ENCODE measurements at regions of chr12 and their contacts with region 1.

Region 1: GRCh38 chr12:48957141-48958048 is at the start of gene ARF3:
- DNase-seq: peak; percentile 79 to 97 (median 92)
- ATAC-seq: peak; percentile 94
- H3K4me3 ChIP-seq: peak within 1 kb of the TSS; percentile 68 to 97
- H3K4me3 Mint-ChIP-seq: peak within 1 kb of the TSS; percentile 97
- H3K27ac ChIP-seq: peak within 1 kb of the TSS; percentile 50 to 71
- H3K27ac Mint-ChIP-seq: peak within 1 kb of the TSS; percentile 86
- H3K4me1 ChIP-seq: peaks cover 19% of the 10 kb centered on the region
- H3K4me1 Mint-ChIP-seq: peaks cover 42% of the 10 kb centered on the region
- H3K27me3 ChIP-seq: no peaks in the 10 kb centered on the region
- H3K27me3 Mint-ChIP-seq: peaks cover 8% of the 10 kb centered on the region
- CTCF ChIP-seq: no peak
- total RNA-seq, gene ARF3: 34.7 to 36.4 TPM

Region 2: GRCh38 chr12:48865434-48866290 is 91.7 kb before region 1 on chr12 and contains the start of gene RND1:
- CTCF ChIA-PET with region 1: no interaction called
- POLR2A ChIA-PET with region 1: interaction called, 3 read pairs
- intact Hi-C with region 1: loop called in 1 of 2 experiments (anchors 1 kb)
- DNase-seq: peak; percentile 58 to 96 (median 85)
- ATAC-seq: peak; percentile 95
- H3K4me3 ChIP-seq: peak within 1 kb of the TSS; percentile 56 to 74
- H3K4me3 Mint-ChIP-seq: peak within 1 kb of the TSS; percentile 93
- H3K27ac ChIP-seq: peak within 1 kb of the TSS; percentile 19 to 28
- H3K27ac Mint-ChIP-seq: peak within 1 kb of the TSS; percentile 84
- H3K4me1 ChIP-seq: peaks cover 15% of the 10 kb centered on the region
- H3K4me1 Mint-ChIP-seq: peaks cover 27% of the 10 kb centered on the region
- H3K27me3 ChIP-seq: peaks cover 7 to 16% of the 10 kb centered on the region in 2 experiments
- H3K27me3 Mint-ChIP-seq: peaks cover 30% of the 10 kb centered on the region
- CTCF ChIP-seq: no peak
- total RNA-seq, gene RND1: 11.9 to 12.9 TPM

Region 3: DNA sequence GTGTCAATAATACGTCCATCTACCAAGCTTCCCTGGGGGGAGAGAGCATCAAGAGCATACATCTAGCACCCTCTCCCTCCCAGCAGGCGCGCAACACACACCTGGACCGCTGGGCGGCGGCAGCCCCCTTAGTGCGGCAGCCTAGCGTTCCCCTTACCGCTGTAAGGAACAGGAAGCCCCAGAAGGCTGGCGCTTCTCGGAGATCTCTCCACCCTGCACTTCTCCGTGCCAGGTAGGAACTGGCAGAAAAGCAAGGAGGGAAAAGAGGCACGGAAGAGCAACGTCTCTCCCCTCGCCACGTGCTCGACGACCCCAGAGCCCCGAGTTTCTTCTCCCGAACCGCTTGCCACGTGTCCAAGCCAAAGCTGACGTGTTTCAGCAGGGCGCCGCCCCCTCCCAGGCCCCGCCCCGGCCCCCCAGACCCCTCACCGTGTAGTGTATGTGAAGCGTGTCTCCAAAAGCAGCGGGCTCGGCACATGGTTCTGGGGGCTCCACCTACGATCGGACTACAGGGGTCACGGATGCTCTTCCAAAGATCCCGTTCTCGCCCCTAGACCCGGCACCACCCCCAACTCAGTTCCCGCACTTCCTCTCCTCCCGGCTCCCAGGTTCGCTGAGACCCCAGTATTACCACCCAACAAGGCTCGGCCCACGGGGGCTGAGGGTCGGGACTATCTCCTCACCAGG is 32.6 kb before region 1 on chr12:
- CTCF ChIA-PET with region 1: interaction called, 8 read pairs
- POLR2A ChIA-PET with region 1: interaction called, 9 read pairs
- intact Hi-C with region 1: loop called (anchors 1 kb)
- DNase-seq: peak; percentile 65 to 90 (median 83)
- ATAC-seq: peak; percentile 69
- H3K4me3 ChIP-seq: peak overlapping the region; percentile 96 to 99
- H3K4me3 Mint-ChIP-seq: peak overlapping the region; percentile 97
- H3K27ac ChIP-seq: peak overlapping the region; percentile 94
- H3K27ac Mint-ChIP-seq: peak overlapping the region; percentile 97
- H3K4me1 ChIP-seq: peaks cover 24% of the 10 kb centered on the region
- H3K4me1 Mint-ChIP-seq: peaks cover 46% of the 10 kb centered on the region
- H3K27me3 ChIP-seq: no peaks in the 10 kb centered on the region
- H3K27me3 Mint-ChIP-seq: no peaks in the 10 kb centered on the region
- CTCF ChIP-seq: peak; percentile 78

Region 4: DNA sequence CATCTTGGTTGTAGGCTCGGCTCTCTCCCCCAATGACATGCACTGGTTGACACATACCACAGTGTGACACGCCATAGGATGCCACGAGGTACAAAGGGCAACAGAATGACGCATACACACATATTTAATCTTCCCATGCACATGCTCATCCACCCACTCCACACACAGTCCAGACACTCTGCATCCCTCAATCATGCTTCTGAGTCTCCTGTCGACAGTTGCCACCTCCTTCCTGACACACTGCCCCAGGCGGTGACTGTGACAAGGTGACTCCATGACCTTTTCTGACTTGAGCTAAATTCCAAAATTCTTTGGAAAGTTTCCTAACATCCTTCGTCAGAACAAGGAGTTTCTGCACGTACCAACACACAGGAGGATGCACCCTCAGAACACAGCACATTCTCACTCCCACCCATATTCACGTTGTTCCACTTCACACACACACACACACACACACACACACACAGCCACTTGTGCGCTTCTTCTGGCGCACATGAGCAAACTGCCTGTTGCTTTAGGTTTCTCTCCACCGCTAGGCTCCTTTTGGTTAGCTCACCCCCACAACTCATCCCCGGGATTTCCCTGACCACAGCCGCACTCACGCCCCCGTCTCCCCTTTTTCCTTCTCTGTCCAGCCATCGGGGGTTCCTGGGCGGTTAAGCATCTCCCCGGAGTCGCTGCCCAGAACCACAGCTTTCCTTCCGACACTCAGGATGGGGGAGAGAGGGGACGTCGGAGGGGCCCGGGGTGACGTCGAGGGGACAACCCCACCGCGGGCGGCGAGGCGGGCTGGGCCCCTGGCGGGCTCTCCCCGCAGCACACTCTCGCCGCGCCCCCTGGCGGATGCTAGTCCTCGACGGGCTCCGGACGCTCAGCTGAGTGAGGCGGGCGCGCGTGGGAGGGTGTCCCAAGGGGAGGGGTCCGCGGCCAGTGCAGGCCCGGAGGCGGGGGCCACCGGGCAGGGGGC is 20.2 kb after region 1 on chr12:
- CTCF ChIA-PET with region 1: interaction called, 38 read pairs
- POLR2A ChIA-PET with region 1: interaction called, 7 read pairs
- intact Hi-C with region 1: loop called (anchors 1 kb)
- DNase-seq: peak; percentile 59 to 92 (median 84)
- ATAC-seq: peak; percentile 55
- H3K4me3 ChIP-seq: peak overlapping the region; percentile 60 to 77
- H3K4me3 Mint-ChIP-seq: peak overlapping the region; percentile 63
- H3K27ac ChIP-seq: no peak overlapping the region
- H3K27ac Mint-ChIP-seq: peak overlapping the region; percentile 76
- H3K4me1 ChIP-seq: peaks cover 44% of the 10 kb centered on the region
- H3K4me1 Mint-ChIP-seq: peaks cover 46% of the 10 kb centered on the region
- H3K27me3 ChIP-seq: peaks cover 14% of the 10 kb centered on the region in 2 experiments
- H3K27me3 Mint-ChIP-seq: peaks cover 28% of the 10 kb centered on the region
- CTCF ChIP-seq: peak; percentile 92

Region 5: GRCh38 chr12:48995061-48995879 is 37.9 kb after region 1 on chr12:
- CTCF ChIA-PET with region 1: interaction called, 3 read pairs
- POLR2A ChIA-PET with region 1: interaction called, 3 read pairs
- intact Hi-C with region 1: loop called in 1 of 2 experiments (anchors 5 kb)
- DNase-seq: peak in 6 of 9 experiments; percentile 53 to 70 (median 63)
- ATAC-seq: no peak
- H3K4me3 ChIP-seq: no peak overlapping the region
- H3K4me3 Mint-ChIP-seq: peak overlapping the region; percentile 49
- H3K27ac ChIP-seq: no peak overlapping the region
- H3K27ac Mint-ChIP-seq: no peak overlapping the region
- H3K4me1 ChIP-seq: peaks cover 39% of the 10 kb centered on the region
- H3K4me1 Mint-ChIP-seq: peaks cover 32% of the 10 kb centered on the region
- H3K27me3 ChIP-seq: peaks cover 32 to 41% of the 10 kb centered on the region in 2 experiments
- H3K27me3 Mint-ChIP-seq: peaks cover 53% of the 10 kb centered on the region
- CTCF ChIP-seq: peak; percentile 79